Endothelial cell of umbilical vein (primary cell): ENCODE measurements at regions of chr13 and their contacts with region 1.

Region 1: DNA sequence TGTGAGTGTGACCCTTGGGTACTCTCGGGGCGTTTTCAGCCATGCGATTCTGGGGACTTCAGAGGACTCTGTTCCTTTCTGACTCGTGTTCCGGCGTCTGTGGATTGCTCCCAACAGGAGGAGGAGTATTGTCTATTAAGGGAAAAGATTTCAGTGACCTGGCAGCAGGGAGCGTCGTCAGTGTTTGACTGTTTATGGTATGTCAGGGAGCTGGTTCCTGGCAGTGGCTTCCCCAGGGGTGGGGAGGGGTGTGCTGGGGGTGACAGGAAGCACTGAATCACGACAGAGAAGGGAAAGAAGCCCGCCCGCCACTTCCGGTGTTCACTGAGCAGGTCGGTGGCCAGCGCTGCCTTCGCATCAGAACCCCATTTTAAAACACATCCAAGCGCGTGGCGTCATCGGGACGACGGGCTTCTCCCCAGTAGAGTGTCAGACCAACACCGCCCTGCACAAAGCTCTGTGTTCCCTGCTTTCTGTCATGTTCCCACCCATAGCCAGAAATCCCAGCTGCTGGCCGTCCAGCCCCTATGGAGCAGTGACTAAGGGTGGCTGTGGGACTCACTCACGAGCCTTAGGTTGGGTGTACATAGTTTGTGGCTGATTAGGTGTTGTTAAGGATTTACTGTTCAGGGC is 33.8 kb downstream of the COL4A2 start:
- DNase-seq: peak; percentile 80
- H3K4me3 ChIP-seq: peak overlapping the region in 1 of 3 experiments; percentile 31
- H3K27ac ChIP-seq: peak overlapping the region; percentile 100
- H3K4me1 ChIP-seq: peaks cover 62% of the 10 kb centered on the region
- H3K27me3 ChIP-seq: no peaks in the 10 kb centered on the region
- CTCF ChIP-seq: no peak
- POLR2A ChIP-seq: peak; percentile 18

Region 2: GRCh38 chr13:110225609-110226562 is 115.0 kb before region 1 on chr13:
- CTCF ChIA-PET with region 1: interaction called, 4 read pairs
- POLR2A ChIA-PET with region 1: no interaction called
- dilution Hi-C with region 1: no loop called
- intact Hi-C with region 1: loop called (anchors 2 kb)
- DNase-seq: peak; percentile 65
- H3K4me3 ChIP-seq: no peak overlapping the region
- H3K27ac ChIP-seq: peak overlapping the region; percentile 56
- H3K4me1 ChIP-seq: peaks cover 21% of the 10 kb centered on the region
- H3K27me3 ChIP-seq: no peaks in the 10 kb centered on the region
- CTCF ChIP-seq: no peak
- POLR2A ChIP-seq: no peak

Region 3: GRCh38 chr13:110263888-110264287 is 77.0 kb before region 1 on chr13:
- CTCF ChIA-PET with region 1: interaction called, 4 read pairs
- POLR2A ChIA-PET with region 1: no interaction called
- dilution Hi-C with region 1: no loop called
- intact Hi-C with region 1: loop called (anchors 1 kb)
- DNase-seq: no peak
- H3K4me3 ChIP-seq: no peak overlapping the region
- H3K27ac ChIP-seq: peak overlapping the region; percentile 25
- H3K4me1 ChIP-seq: peaks cover 85% of the 10 kb centered on the region
- H3K27me3 ChIP-seq: no peaks in the 10 kb centered on the region
- CTCF ChIP-seq: no peak
- POLR2A ChIP-seq: no peak

Region 4: DNA sequence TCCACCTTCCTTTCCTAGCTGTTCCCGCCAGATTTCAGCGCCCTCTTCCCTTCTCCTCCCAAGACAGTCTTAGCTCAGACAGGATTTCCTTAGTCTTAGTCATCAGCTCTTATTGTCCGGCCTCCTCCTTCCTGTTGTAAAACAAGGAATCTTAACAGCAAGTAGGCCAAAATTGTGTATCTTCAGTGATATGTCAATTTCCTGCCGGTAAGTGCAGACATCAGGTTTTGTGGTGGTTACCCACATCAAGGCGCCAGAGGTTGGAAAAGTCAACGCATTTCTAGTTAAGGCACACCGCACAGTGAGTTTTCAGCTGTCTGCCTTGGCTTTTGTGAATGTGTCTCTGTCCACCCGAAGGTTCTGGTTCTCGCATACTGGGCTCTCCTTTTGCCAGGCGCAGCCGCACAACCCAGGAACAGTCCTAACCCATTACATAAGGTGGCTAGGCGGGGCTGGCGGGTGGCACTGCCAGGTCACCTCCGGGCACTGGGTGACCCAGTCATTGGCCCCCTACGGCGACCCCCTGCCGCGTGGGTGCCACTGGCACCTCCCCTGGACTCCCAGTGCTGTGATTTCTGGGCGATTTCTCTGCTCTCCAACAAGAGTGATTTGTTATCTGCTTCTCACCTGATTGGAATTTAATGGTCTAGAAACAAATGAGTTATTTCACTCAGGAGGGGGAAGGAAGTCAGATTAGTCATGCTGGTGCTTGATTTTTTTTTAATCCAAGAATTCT is 21.0 kb before region 1 on chr13:
- CTCF ChIA-PET with region 1: interaction called, 11 read pairs
- POLR2A ChIA-PET with region 1: interaction called, 3 read pairs
- dilution Hi-C with region 1: no loop called
- intact Hi-C with region 1: loop called (anchors 1 kb)
- DNase-seq: peak; percentile 87
- H3K4me3 ChIP-seq: peak overlapping the region in 1 of 3 experiments; percentile 30
- H3K27ac ChIP-seq: peak overlapping the region; percentile 97
- H3K4me1 ChIP-seq: peaks cover 36% of the 10 kb centered on the region
- H3K27me3 ChIP-seq: no peaks in the 10 kb centered on the region
- CTCF ChIP-seq: no peak
- POLR2A ChIP-seq: no peak

Region 5: DNA sequence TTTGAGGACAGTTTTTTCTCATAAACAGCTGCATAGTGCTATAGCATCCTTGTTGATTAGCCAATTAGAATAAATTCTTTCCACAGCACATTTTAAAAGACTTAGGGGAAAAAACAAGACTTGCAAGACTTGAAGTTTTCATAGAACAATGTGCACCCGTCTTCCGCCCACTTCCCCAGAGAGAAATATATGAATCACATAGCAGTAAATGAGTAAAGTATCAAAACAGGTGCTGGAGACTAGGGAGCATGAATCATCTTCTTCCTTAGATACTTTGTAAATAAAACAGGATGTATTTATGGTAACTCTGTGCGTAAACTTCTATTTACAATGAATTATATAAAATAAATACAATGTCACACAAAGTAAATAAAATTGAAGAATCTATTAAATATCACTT is 41.3 kb after region 1 on chr13:
- CTCF ChIA-PET with region 1: no interaction called
- POLR2A ChIA-PET with region 1: no interaction called
- dilution Hi-C with region 1: no loop called
- intact Hi-C with region 1: loop called (anchors 1 kb)
- DNase-seq: peak; percentile 90
- H3K4me3 ChIP-seq: no peak overlapping the region
- H3K27ac ChIP-seq: peak overlapping the region; percentile 89
- H3K4me1 ChIP-seq: peaks cover 37% of the 10 kb centered on the region
- H3K27me3 ChIP-seq: no peaks in the 10 kb centered on the region
- CTCF ChIP-seq: no peak
- POLR2A ChIP-seq: no peak

Region 6: DNA sequence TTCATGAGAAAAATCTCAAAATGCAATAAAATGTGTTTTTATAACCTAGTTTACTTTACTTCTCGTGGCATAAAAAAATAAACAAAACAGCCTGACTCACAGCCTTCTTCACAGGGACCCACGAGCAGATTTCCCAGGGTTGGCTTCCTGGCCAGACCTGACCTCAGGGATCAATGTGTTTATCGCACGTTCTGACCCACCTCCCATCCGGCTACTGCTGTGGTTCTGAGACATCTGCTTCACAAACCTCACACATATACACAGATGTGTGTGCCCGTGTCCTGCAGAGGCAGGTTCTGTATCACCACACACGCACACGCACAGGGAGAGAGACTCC is 84.5 kb after region 1 on chr13:
- CTCF ChIA-PET with region 1: no interaction called
- POLR2A ChIA-PET with region 1: no interaction called
- dilution Hi-C with region 1: no loop called
- intact Hi-C with region 1: loop called (anchors 1 kb)
- DNase-seq: peak; percentile 93
- H3K4me3 ChIP-seq: no peak overlapping the region
- H3K27ac ChIP-seq: peak overlapping the region; percentile 89
- H3K4me1 ChIP-seq: peaks cover 54% of the 10 kb centered on the region
- H3K27me3 ChIP-seq: no peaks in the 10 kb centered on the region
- CTCF ChIP-seq: no peak
- POLR2A ChIP-seq: no peak